B cell (primary cell): ENCODE measurements at regions of chr3 and their contacts with region 1.

Region 1: GRCh38 chr3:143119009-143119914 is at the start of gene CHST2:
- DNase-seq: peak; percentile 87
- ATAC-seq: peak; percentile 88
- H3K4me3 ChIP-seq: peak within 1 kb of the TSS; percentile 75 to 95 (median 91)
- H3K4me3 Mint-ChIP-seq: peak within 1 kb of the TSS; percentile 94
- H3K27ac ChIP-seq: peak within 1 kb of the TSS; percentile 63 to 72
- H3K27ac Mint-ChIP-seq: peak within 1 kb of the TSS; percentile 95
- H3K4me1 ChIP-seq: peaks cover 25 to 32% of the 10 kb centered on the region in 2 donors
- H3K4me1 Mint-ChIP-seq: peaks cover 31% of the 10 kb centered on the region
- H3K27me3 ChIP-seq: peaks cover 0 to 3% (median 0%) of the 10 kb centered on the region in 4 experiments
- H3K27me3 Mint-ChIP-seq: no peaks in the 10 kb centered on the region
- CTCF ChIP-seq: no peak
- total RNA-seq, gene CHST2: 24.8 and 25.0 TPM in 2 replicates

Region 2: GRCh38 chr3:142159083-142159740 is 960.0 kb before region 1 on chr3:
- CTCF ChIA-PET with region 1: no interaction called
- POLR2A ChIA-PET with region 1: no interaction called
- intact Hi-C with region 1: no loop called
- DNase-seq: no peak
- ATAC-seq: no peak
- H3K4me3 ChIP-seq: no peak overlapping the region
- H3K4me3 Mint-ChIP-seq: no peak overlapping the region
- H3K27ac ChIP-seq: no peak overlapping the region
- H3K27ac Mint-ChIP-seq: no peak overlapping the region
- H3K4me1 ChIP-seq: no peaks in the 10 kb centered on the region
- H3K4me1 Mint-ChIP-seq: no peaks in the 10 kb centered on the region
- H3K27me3 ChIP-seq: no peaks in the 10 kb centered on the region
- H3K27me3 Mint-ChIP-seq: no peaks in the 10 kb centered on the region
- CTCF ChIP-seq: no peak

Region 3: GRCh38 chr3:143084856-143085731 is 34.2 kb before region 1 on chr3:
- CTCF ChIA-PET with region 1: interaction called, 6 read pairs
- POLR2A ChIA-PET with region 1: interaction called, 3 read pairs
- intact Hi-C with region 1: loop called (anchors 5 kb)
- DNase-seq: peak; percentile 17
- ATAC-seq: peak; percentile 47
- H3K4me3 ChIP-seq: no peak overlapping the region
- H3K4me3 Mint-ChIP-seq: no peak overlapping the region
- H3K27ac ChIP-seq: no peak overlapping the region
- H3K27ac Mint-ChIP-seq: peak overlapping the region; percentile 69
- H3K4me1 ChIP-seq: peaks cover 4 to 22% of the 10 kb centered on the region in 2 donors
- H3K4me1 Mint-ChIP-seq: peaks cover 24% of the 10 kb centered on the region
- H3K27me3 ChIP-seq: peaks cover 0 to 4% (median 0%) of the 10 kb centered on the region in 4 experiments
- H3K27me3 Mint-ChIP-seq: no peaks in the 10 kb centered on the region
- CTCF ChIP-seq: no peak

Region 4: GRCh38 chr3:143179603-143180002 is 60.3 kb after region 1 on chr3:
- CTCF ChIA-PET with region 1: no interaction called
- POLR2A ChIA-PET with region 1: no interaction called
- intact Hi-C with region 1: loop called (anchors 1 kb)
- DNase-seq: no peak
- ATAC-seq: no peak
- H3K4me3 ChIP-seq: no peak overlapping the region
- H3K4me3 Mint-ChIP-seq: no peak overlapping the region
- H3K27ac ChIP-seq: no peak overlapping the region
- H3K27ac Mint-ChIP-seq: no peak overlapping the region
- H3K4me1 ChIP-seq: peaks cover 20 to 25% of the 10 kb centered on the region in 2 donors
- H3K4me1 Mint-ChIP-seq: peaks cover 47% of the 10 kb centered on the region
- H3K27me3 ChIP-seq: no peaks in the 10 kb centered on the region
- H3K27me3 Mint-ChIP-seq: no peaks in the 10 kb centered on the region
- CTCF ChIP-seq: no peak

Region 5: GRCh38 chr3:143529018-143529478 is 409.8 kb after region 1 on chr3:
- CTCF ChIA-PET with region 1: no interaction called
- POLR2A ChIA-PET with region 1: interaction called, 4 read pairs
- intact Hi-C with region 1: loop called (anchors 2 kb)
- DNase-seq: peak; percentile 91
- ATAC-seq: peak; percentile 99
- H3K4me3 ChIP-seq: peak overlapping the region in 4 of 5 experiments; percentile 5 to 50 (median 22)
- H3K4me3 Mint-ChIP-seq: peak overlapping the region; percentile 72
- H3K27ac ChIP-seq: peak overlapping the region; percentile 98
- H3K27ac Mint-ChIP-seq: peak overlapping the region; percentile 91
- H3K4me1 ChIP-seq: peaks cover 55 to 69% of the 10 kb centered on the region in 2 donors
- H3K4me1 Mint-ChIP-seq: peaks cover 79% of the 10 kb centered on the region
- H3K27me3 ChIP-seq: no peaks in the 10 kb centered on the region
- H3K27me3 Mint-ChIP-seq: no peaks in the 10 kb centered on the region
- CTCF ChIP-seq: no peak

Region 6: GRCh38 chr3:143847787-143848631 is 728.7 kb after region 1 on chr3 and contains the start of gene SLC9A9:
- CTCF ChIA-PET with region 1: no interaction called
- POLR2A ChIA-PET with region 1: no interaction called
- intact Hi-C with region 1: loop called (anchors 1 kb)
- DNase-seq: peak; percentile 61
- ATAC-seq: peak; percentile 85
- H3K4me3 ChIP-seq: peak within 1 kb of the TSS; percentile 60 to 99 (median 95)
- H3K4me3 Mint-ChIP-seq: peak within 1 kb of the TSS; percentile 99
- H3K27ac ChIP-seq: peak within 1 kb of the TSS; percentile 27 to 86
- H3K27ac Mint-ChIP-seq: peak within 1 kb of the TSS; percentile 95
- H3K4me1 ChIP-seq: peaks cover 8 to 15% of the 10 kb centered on the region in 2 donors
- H3K4me1 Mint-ChIP-seq: peaks cover 51% of the 10 kb centered on the region
- H3K27me3 ChIP-seq: no peaks in the 10 kb centered on the region
- H3K27me3 Mint-ChIP-seq: no peaks in the 10 kb centered on the region
- CTCF ChIP-seq: no peak
- total RNA-seq, gene SLC9A9: 17.3 and 18.7 TPM in 2 replicates